Astrocyte of the cerebellum (primary cell): ENCODE measurements at regions of chr10 and their contacts with region 1.

Region 1: DNA sequence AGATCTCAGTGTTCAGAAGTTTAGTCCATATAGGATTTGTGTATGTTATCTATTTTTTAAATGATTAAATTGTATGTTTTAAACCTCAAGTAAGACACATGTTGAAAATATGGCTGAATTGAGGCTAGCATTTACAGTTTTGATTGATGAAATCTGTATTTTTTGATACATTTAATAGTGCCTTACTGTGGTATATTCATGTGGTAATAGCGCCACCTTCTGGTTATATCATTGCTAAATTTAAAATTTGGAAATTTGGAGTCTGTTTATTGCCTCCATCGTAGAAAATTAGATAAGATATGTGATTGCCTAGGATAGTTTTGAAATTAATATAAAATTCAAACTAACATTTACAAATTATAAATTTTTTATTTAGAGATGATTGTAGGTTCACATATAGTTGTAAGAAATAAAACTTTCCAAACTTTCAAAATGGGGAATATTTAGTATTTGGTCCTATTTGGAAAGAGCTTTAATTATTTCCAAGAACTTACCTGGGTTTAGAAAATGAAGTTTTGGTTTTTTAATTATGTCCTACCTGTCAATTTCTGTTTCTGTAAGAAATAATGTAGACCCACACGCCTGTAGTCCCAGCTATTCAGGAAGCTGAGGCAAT is 19.1 kb upstream of the ARMS2 start:
- DNase-seq: peak; percentile 44
- H3K4me3 ChIP-seq: no peak overlapping the region
- CTCF ChIP-seq: no peak

Region 2: DNA sequence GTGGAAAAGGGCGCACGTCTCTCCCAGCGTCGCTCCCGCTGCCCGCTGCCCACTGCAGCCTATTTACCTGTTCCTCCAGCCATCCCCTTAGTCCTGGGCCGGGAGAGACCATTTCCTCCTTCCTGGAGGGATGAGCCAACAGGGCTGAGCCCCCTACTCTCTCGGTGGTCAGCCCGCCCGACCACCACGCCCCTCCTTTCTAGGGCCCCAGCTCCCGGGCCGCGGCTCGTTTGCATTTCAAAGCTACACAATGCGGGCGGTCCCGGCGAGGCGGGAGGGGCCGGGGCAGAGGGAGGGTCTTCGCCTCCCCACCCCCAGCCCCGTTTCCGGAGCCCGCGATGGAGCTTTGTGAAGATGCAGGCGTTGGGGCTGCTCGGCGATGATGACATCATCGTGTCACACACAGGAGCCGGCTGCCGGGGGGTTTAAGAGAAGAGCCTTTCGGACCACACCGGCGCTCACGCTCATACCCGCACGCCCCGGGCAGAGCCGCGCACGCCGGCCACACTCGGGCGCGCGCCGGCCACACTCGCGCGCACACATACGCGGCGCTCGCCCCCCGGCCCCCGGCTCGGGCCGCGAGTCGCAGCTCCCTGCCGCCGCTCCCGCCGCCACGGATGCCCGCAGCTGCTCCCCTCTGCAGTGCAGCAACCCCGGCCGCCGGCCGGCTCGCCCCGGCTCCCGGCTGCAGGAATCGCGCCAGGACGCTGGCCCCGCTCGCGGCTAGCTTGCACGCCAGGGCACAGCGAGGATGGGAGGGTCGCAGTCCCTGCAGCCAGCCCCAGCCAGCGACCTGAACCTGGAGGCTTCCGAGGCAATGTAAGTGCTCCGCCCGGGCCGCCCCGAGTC is 271.9 kb before region 1 on chr10:
- in situ Hi-C with region 1: loop called (anchors 25 kb)
- DNase-seq: no peak
- H3K4me3 ChIP-seq: peak overlapping the region; percentile 56
- CTCF ChIP-seq: no peak

Region 3: DNA sequence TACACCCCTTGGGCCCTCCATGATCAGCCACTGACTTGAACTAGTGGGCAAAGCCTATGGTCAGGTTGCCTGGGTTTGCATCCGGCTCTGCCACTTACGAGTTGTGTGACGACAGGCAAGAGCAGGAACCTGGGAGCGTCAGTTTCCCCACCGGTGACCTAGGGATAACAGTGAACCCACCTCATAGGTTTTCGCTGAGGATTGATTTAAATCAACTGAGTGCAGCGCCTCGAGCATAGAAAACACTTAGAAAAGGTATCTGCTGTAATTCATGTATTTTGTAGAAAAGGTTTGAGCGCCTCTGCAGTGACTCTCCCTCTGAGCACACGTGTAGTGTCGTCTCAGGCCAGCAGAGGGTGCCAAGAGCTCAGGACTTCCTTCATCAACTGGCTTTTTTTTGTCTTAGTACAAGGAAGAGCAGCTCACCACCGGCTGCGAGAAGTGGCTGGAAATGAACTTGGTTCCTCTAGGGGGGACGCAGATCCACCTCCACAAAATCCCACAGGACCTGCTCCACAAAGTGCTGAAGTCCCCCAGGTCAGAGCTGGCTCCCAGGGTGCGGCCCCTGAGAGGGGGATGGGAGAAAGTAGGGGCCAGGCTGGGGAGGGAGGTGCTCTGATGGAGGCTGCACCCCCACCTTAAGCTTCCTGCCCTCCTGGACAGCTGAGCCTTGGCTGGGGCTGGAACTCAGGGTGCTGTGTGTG is 136.6 kb before region 1 on chr10:
- in situ Hi-C with region 1: loop called (anchors 5 kb)
- DNase-seq: peak; percentile 69
- H3K4me3 ChIP-seq: peak overlapping the region; percentile 9
- CTCF ChIP-seq: peak; percentile 92

Region 4: GRCh38 chr10:122362621-122363020 is 72.7 kb before region 1 on chr10:
- in situ Hi-C with region 1: no loop called
- DNase-seq: no peak
- H3K4me3 ChIP-seq: no peak overlapping the region
- CTCF ChIP-seq: no peak

Region 5: GRCh38 chr10:122388287-122388997 is 46.9 kb before region 1 on chr10:
- in situ Hi-C with region 1: no loop called
- DNase-seq: no peak
- H3K4me3 ChIP-seq: no peak overlapping the region
- CTCF ChIP-seq: no peak